Right cardiac atrium (tissue), 5 donors: ENCODE measurements at regions of chr15 and their contacts with region 1.

Region 1: GRCh38 chr15:63166219-63166618 is 8.9 kb upstream of the RPS27L start:
- DNase-seq: no peak
- ATAC-seq: no peak
- H3K4me3 ChIP-seq: no peak overlapping the region
- H3K27ac ChIP-seq: no peak overlapping the region
- H3K4me1 ChIP-seq: no peaks in the 10 kb centered on the region
- H3K27me3 ChIP-seq: no peaks in the 10 kb centered on the region

Region 2: GRCh38 chr15:63402498-63403253 is 236.5 kb after region 1 on chr15:
- intact Hi-C with region 1: loop called in 1 of 4 experiments (anchors 10 kb)
- DNase-seq: no peak
- ATAC-seq: peak; percentile 41 to 52
- H3K4me3 ChIP-seq: no peak overlapping the region
- H3K27ac ChIP-seq: no peak overlapping the region
- H3K4me1 ChIP-seq: no peaks in the 10 kb centered on the region
- H3K27me3 ChIP-seq: no peaks in the 10 kb centered on the region